Gastrocnemius medialis (tissue), 4 donors: ENCODE measurements at regions of chrX and their contacts with region 1.

Region 1: DNA sequence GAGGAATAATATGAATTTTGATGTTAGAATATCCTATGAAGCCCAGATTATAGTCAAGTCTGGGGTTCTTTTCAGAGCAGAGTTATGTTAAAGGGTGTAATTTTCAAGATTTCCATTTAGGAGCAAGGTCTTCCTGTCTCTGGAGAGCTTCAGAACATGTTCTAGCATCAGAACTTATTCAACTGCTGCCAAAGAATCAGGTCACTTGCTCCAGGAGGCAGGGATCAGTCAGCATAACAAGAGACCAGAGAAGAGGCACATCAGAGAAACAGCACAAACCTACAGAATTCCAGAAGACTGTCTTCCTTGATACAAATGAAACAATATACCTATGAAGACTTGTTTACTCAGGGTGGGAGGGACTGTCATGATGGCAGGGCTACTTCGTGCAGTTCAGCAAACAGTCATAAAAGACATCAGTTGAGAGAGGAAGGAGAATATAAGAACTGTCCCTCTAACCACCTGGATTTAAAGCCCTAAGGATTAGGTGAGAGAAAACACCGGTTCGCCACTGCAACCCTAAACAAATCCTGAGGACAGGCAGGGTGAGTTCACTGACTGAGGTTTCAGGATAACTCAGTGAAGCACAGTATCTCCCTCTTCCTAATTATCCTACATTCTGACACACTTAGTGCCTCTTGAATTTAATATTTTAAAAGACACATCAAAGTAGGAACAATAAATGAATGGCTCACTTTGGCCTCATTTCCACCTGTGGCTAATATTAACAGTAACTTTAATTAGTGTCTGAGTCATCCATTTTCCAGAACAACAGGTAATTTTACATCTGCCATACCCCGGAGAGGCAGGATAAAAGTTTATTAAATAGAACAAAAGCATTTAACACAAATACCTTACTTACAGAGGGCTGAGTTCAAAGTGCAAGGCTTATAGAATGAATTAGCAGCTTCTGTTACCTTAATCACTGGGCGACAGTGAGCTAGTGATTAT is 93.0 kb downstream of the HDAC8 start:
- DNase-seq: no peak
- ATAC-seq: no peak
- H3K4me3 ChIP-seq: no peak overlapping the region
- H3K27ac ChIP-seq: no peak overlapping the region
- H3K4me1 ChIP-seq: peaks cover 12 to 31% of the 10 kb centered on the region in 2 donors
- H3K27me3 ChIP-seq: no peaks in the 10 kb centered on the region
- CTCF ChIP-seq: no peak
- POLR2A ChIP-seq: no peak

Region 2: DNA sequence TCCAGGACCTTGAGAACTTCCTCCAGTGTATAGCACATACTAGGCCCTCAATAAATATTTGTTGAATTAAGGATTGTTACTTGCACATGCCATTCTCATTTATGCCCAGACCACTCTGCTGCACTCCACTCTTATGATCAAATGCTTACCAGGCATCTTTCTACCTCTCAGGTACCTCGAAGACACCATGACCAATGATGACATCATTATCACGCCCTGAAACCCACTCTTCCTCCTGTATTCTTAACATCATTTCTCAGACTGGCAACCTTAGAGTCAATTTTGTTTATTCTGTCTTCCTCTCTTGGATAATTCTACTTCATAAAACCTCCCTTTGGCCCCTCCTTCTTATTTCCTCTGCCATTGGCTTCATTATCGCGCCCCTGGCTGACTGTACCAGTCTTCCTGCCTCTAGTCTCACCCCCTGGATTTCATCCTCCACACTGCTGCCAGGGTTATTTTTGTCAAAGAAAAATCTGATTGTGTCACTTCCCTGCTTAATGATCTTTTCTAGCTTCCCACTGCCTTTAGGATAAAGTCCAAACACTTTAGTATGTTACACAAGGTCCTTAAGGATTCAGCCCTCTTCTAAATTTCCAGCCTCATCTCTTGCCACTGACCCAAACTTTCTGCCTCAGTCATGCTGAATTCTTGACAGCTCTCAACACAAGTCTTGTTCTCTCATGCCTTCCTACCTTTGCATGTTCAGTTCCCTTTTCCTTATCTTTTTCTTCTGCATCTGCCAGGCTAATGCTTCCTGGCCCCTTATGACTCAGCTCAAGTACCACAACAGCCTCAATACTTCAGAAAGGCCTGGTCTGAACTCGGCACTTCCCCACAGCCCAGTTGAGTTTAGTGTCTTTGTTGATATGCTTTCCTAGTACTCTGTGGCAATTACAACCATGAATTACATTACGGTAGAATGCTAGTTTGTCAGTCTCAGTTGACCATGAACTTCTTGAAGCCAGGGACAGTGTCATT is 47.2 kb after region 1 on chrX:
- in situ Hi-C with region 1: no loop called
- intact Hi-C with region 1: loop called (anchors 1 kb)
- DNase-seq: no peak
- ATAC-seq: no peak
- H3K4me3 ChIP-seq: no peak overlapping the region
- H3K27ac ChIP-seq: no peak overlapping the region
- H3K4me1 ChIP-seq: peaks cover 5 to 9% of the 10 kb centered on the region in 2 donors
- H3K27me3 ChIP-seq: peaks cover 0 to 3% (median 0%) of the 10 kb centered on the region in 3 donors
- CTCF ChIP-seq: no peak
- POLR2A ChIP-seq: no peak